ENCODE measurements at regions of chr7 and their contacts with region 1.

Region 1: DNA sequence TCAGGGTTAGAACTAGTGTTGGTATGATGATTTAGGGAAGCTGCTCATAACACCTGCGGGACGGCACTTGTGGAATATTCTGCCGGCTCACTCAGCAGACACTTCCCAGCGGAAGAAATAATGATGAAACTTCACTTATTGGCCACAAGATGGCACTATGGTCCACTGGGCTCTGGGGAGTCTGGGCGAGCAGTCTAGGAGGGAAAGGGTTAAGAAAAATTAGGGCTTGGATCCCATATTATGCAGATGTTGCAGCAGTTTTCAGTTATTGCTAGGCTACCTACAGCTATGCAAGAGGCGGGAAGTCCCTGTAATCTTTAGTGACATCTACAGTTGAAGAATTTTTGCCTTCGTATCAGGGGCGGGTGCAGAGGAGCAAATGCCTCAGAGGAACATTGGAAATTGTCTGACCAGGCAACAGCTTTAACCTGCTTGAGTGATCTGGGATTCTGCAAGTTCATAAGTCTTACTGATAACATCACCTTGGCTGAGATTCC is 238.7 kb upstream of the PRSS58 start:
- H3K4me3 ChIP-seq: no peak overlapping the region
- H3K27ac ChIP-seq: no peak overlapping the region
- H3K4me1 ChIP-seq: peaks cover 4% of the 10 kb centered on the region
- CTCF ChIP-seq: no peak

Region 2: DNA sequence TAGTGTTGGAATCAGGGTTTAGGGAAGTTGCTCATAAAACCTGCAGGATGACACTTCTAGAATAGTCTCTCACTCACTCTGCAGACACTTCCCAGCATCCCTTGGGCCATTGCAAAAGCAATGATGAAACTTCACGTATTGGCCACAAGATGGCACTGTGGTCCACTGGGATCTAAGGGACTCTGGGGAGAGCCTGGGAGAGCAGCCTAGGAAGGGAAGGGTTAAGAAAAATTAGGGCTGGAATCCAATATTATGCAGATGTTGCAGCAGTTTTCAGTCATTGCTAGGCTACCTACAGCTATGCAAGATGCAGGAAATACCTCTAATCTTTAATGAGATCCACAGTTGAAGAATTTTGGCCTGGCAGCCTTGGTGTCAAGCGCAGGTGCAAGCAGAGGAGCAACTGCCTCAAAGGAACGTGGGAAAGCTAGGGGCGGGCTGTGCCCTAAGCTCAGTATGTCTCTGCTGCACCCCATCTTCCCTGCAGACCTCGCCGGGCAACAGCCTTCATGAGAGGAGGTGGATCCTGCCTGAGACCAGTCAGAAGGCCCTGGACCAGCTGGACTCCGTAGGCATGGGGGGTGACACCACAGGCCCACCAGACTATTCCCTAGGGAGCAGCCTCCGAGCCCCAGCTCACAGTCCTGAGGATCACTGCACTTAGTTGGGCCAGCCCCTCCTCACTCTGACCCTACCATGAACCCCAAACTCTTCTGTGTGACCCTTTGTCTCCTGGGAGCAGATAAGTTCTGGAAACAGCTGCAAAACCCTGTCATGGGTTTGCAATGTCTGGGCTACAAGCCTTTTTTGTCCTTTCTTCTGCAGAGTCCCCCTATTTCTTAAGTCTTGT is 110.9 kb before region 1 on chr7:
- CTCF ChIA-PET with region 1: interaction called, 11 read pairs
- POLR2A ChIA-PET with region 1: no interaction called
- H3K4me3 ChIP-seq: no peak overlapping the region
- H3K27ac ChIP-seq: no peak overlapping the region
- H3K4me1 ChIP-seq: no peaks in the 10 kb centered on the region
- CTCF ChIP-seq: peak; percentile 48

Region 3: DNA sequence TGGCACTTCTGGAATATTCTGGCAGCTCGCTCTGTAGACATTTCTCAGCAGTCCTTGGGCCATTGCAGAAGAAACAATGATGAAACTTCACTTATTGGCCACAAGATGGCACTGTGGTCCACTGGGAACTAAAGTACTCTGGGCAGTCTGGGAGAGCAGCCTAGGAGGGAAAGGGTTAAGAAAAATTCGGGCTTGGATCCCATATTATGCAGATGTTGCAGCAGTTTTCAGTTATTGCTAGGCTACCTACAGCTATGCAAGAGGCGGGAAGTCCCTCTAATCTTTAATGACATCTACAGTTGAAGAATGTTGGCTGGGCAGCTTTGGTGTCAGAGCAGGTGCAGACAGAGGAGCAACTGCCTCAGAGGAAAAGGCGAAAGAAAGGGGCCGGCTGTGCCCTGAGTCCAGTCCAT is 37.0 kb before region 1 on chr7:
- CTCF ChIA-PET with region 1: interaction called, 21 read pairs
- POLR2A ChIA-PET with region 1: no interaction called
- H3K4me3 ChIP-seq: no peak overlapping the region
- H3K27ac ChIP-seq: no peak overlapping the region
- H3K4me1 ChIP-seq: no peaks in the 10 kb centered on the region
- CTCF ChIP-seq: peak; percentile 59; the same call in 1 of the 2 replicates

Region 4: DNA sequence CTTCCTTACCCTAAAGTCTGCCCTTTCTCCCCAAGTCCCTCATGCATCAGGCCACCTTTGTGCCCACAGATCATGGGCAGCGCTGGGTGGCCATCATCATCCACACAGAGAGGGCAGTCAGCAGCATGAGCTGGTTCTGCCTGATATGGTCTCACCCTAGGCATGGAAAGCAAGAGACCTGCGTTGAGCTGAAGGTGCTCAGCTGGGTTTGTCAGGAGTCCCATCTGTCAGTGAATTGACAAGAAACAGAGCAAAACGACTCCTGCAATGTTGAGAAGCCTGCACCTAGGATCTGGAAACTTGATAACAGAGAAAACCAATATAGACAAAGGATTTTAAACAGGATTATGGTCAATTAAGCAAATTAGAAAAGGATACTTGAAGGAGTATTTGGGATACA is 10.0 kb after region 1 on chr7:
- CTCF ChIA-PET with region 1: interaction called, 12 read pairs
- POLR2A ChIA-PET with region 1: no interaction called
- H3K4me3 ChIP-seq: no peak overlapping the region
- H3K27ac ChIP-seq: no peak overlapping the region
- H3K4me1 ChIP-seq: no peaks in the 10 kb centered on the region
- CTCF ChIP-seq: no peak

Region 5: GRCh38 chr7:142523821-142524460 is 27.3 kb after region 1 on chr7:
- CTCF ChIA-PET with region 1: interaction called, 13 read pairs
- POLR2A ChIA-PET with region 1: no interaction called
- H3K4me3 ChIP-seq: no peak overlapping the region
- H3K27ac ChIP-seq: no peak overlapping the region
- H3K4me1 ChIP-seq: no peaks in the 10 kb centered on the region
- CTCF ChIP-seq: no peak

Region 6: GRCh38 chr7:142711746-142712619 is 215.4 kb after region 1 on chr7:
- CTCF ChIA-PET with region 1: no interaction called
- POLR2A ChIA-PET with region 1: no interaction called
- H3K4me3 ChIP-seq: no peak overlapping the region
- H3K27ac ChIP-seq: no peak overlapping the region
- H3K4me1 ChIP-seq: no peaks in the 10 kb centered on the region
- CTCF ChIP-seq: no peak